Breast epithelium (tissue), 4 donors: ENCODE measurements at regions of chr14 and their contacts with region 1.

Region 1: DNA sequence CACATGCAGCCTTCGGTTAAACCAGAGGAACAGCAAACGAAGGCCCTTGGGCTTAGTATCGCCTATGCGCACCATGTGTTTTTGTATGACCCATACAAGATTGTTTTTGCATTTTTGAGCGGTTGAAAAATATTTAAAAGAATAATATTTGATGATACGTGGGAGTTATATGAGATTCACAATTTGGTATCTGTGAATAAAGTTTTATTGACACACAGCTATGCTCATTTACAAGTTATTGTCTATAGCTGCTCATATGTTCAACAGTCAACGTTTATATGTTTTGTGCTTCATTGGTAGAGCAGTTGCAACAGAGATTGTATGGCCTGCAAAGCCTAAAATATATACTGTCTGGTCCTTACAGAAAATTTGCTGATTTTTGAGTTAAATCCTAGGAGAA is 297.2 kb downstream of the VRK1 start:
- DNase-seq: no peak
- H3K4me3 ChIP-seq: no peak overlapping the region
- H3K27ac ChIP-seq: no peak overlapping the region
- H3K4me1 ChIP-seq: no peaks in the 10 kb centered on the region
- H3K27me3 ChIP-seq: peaks cover 0 to 4% of the 10 kb centered on the region in 2 donors
- CTCF ChIP-seq: no peak
- POLR2A ChIP-seq: no peak

Region 2: GRCh38 chr14:97061198-97061597 is 33.1 kb before region 1 on chr14:
- intact Hi-C with region 1: no loop called
- DNase-seq: no peak
- H3K4me3 ChIP-seq: no peak overlapping the region
- H3K27ac ChIP-seq: no peak overlapping the region
- H3K4me1 ChIP-seq: no peaks in the 10 kb centered on the region
- H3K27me3 ChIP-seq: peaks cover 0 to 23% of the 10 kb centered on the region in 2 donors
- CTCF ChIP-seq: no peak
- POLR2A ChIP-seq: no peak

Region 3: GRCh38 chr14:98341206-98341605 is 1246.9 kb after region 1 on chr14:
- intact Hi-C with region 1: loop called (anchors 5 kb)
- DNase-seq: no peak
- H3K4me3 ChIP-seq: no peak overlapping the region
- H3K27ac ChIP-seq: no peak overlapping the region
- H3K4me1 ChIP-seq: no peaks in the 10 kb centered on the region
- H3K27me3 ChIP-seq: no peaks in the 10 kb centered on the region
- CTCF ChIP-seq: no peak
- POLR2A ChIP-seq: no peak